Ovary (tissue), 10 donors: ENCODE measurements at regions of chr1 and their contacts with region 1.

Region 1: GRCh38 chr1:160494620-160495019 is 28.4 kb downstream of the SLAMF6 start:
- DNase-seq: no peak
- H3K4me3 ChIP-seq: no peak overlapping the region
- H3K27ac ChIP-seq: no peak overlapping the region
- H3K4me1 ChIP-seq: no peaks in the 10 kb centered on the region
- H3K27me3 ChIP-seq: no peaks in the 10 kb centered on the region
- CTCF ChIP-seq: no peak
- EP300 ChIP-seq: no peak
- POLR2A ChIP-seq: no peak

Region 2: DNA sequence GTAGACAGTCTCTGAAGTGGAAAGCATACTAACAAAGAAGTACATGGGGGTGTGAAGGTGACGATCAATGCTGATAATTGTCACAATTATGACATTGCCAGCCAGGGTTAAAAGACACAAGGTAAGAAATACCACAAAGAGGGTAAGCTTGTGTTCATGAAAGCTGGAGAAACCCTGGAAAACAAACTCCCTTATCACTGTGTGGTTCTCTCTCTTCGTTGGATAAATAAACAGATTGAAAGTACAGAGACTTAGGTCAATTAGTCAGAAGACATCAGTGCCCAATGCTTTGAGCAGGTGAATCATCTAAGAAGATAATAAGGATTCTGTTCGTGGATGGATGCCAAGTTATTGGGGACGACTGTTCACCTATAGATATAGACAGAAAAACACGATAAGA is 1214.9 kb before region 1 on chr1:
- intact Hi-C with region 1: loop called in 1 of 4 experiments (anchors 5 kb)
- DNase-seq: no peak
- H3K4me3 ChIP-seq: no peak overlapping the region
- H3K27ac ChIP-seq: no peak overlapping the region
- H3K4me1 ChIP-seq: no peaks in the 10 kb centered on the region
- H3K27me3 ChIP-seq: no peaks in the 10 kb centered on the region
- CTCF ChIP-seq: no peak
- EP300 ChIP-seq: no peak
- POLR2A ChIP-seq: no peak